Endothelial cell of umbilical vein (primary cell): ENCODE measurements at regions of chr5 and their contacts with region 1.

Region 1: GRCh38 chr5:56123531-56124243 is 109.4 kb downstream of the ANKRD55 start:
- DNase-seq: peak; percentile 99
- H3K4me3 ChIP-seq: peak overlapping the region in 1 of 3 experiments; percentile 33
- H3K27ac ChIP-seq: peak overlapping the region; percentile 83
- H3K4me1 ChIP-seq: peaks cover 40% of the 10 kb centered on the region
- H3K27me3 ChIP-seq: no peaks in the 10 kb centered on the region
- CTCF ChIP-seq: no peak
- POLR2A ChIP-seq: peak; percentile 74

Region 2: DNA sequence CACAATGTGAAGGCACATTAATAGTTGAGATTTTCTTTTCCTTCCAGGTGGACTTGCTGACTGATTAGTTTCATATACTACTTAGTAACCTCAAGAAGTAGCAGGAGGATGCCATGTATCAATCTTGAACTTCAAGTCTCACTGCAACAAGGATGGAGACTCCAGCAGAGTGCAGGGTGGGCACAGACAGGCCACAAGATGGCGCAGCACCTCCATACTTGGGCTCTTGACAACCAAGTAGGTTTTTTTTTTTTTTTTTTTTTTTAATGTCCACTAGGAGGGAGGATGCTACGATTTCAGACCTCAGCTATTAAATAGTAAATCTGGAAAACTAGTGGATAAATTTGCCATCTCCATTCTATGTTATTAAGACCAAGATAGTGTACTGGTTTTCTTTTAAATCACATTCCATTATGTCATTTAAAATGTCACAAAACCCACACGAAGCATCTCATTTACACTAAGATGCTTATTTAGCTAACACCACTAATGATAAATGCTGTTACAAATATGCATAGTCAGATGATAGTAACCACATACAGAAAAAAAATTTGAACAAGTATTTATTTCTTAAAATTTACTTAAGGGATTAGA is 187.5 kb before region 1 on chr5:
- CTCF ChIA-PET with region 1: interaction called, 18 read pairs
- POLR2A ChIA-PET with region 1: interaction called, 3 read pairs
- dilution Hi-C with region 1: no loop called
- intact Hi-C with region 1: no loop called
- DNase-seq: peak; percentile 88
- H3K4me3 ChIP-seq: no peak overlapping the region
- H3K27ac ChIP-seq: no peak overlapping the region
- H3K4me1 ChIP-seq: no peaks in the 10 kb centered on the region
- H3K27me3 ChIP-seq: no peaks in the 10 kb centered on the region
- CTCF ChIP-seq: peak; percentile 82 to 94
- POLR2A ChIP-seq: no peak

Region 3: DNA sequence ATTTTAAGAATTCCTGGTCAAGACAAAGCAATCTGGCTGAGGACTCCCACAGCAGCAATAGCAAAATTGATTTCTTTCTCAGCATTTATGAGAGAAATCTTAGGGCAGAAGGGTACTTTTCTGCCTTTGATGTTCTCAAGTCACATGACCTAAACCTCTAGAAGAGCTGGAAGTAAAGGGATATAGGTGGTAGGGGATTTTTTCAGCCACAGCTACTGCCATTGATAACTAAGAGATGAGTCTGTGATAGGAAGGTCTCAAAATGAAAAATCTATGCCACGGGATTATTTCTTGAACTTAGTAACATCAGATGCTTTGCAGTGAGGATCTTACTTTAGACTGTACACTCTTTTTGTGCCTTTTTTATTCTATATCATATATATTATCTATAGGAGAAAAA is 164.5 kb before region 1 on chr5:
- CTCF ChIA-PET with region 1: no interaction called
- POLR2A ChIA-PET with region 1: no interaction called
- dilution Hi-C with region 1: no loop called
- intact Hi-C with region 1: no loop called
- DNase-seq: no peak
- H3K4me3 ChIP-seq: no peak overlapping the region
- H3K27ac ChIP-seq: no peak overlapping the region
- H3K4me1 ChIP-seq: no peaks in the 10 kb centered on the region
- H3K27me3 ChIP-seq: no peaks in the 10 kb centered on the region
- CTCF ChIP-seq: no peak
- POLR2A ChIP-seq: no peak

Region 4: DNA sequence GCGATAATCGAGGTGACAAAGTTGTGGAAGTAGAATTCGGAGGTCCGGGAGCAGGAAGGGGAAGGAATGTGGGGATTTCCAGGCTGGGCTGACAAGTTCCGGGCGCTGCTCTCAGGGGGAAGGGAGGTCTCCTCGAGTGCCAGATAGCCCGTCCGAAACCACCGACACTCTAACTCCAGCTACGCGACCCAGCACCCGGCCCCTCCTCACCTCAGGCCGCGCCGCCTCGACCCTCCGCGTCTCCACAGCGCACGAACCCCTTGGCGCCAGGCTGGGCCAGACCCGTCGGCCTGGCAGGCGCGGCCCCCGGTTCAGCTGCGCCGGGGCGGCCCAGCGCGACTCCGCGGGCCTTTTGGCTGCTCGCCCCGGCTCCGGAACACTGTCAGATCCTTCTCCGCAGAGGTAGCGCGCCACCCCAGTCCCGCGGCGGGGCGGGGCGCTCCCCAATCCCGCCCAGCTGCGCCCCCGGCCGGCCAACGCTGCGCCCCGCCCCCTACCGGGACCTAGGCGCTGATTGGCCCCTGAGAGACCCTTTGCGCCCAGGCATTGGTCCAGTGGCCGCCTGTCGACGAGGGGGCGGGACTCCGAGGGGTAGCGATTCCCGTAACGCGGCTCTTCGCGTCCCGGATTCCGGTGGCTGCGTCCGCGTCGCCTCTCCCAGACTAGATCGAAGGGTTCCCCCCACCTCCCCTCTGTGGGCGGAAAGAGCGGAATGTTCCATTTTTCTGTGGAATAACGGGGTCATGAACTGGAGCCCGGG is 128.9 kb before region 1 on chr5 and contains the start of gene IL6ST:
- CTCF ChIA-PET with region 1: interaction called, 5 read pairs
- POLR2A ChIA-PET with region 1: no interaction called
- dilution Hi-C with region 1: no loop called
- intact Hi-C with region 1: loop called (anchors 1 kb)
- DNase-seq: peak; percentile 99
- H3K4me3 ChIP-seq: peak within 1 kb of the TSS; percentile 70 to 100 (median 99)
- H3K27ac ChIP-seq: peak within 1 kb of the TSS; percentile 99
- H3K4me1 ChIP-seq: peaks cover 30% of the 10 kb centered on the region
- H3K27me3 ChIP-seq: no peaks in the 10 kb centered on the region
- CTCF ChIP-seq: no peak
- POLR2A ChIP-seq: peak; percentile 95
- total RNA-seq, gene IL6ST: 345 and 361 TPM in 2 replicates

Region 5: GRCh38 chr5:56039985-56040384 is 83.7 kb before region 1 on chr5:
- CTCF ChIA-PET with region 1: no interaction called
- POLR2A ChIA-PET with region 1: no interaction called
- dilution Hi-C with region 1: no loop called
- intact Hi-C with region 1: loop called (anchors 5 kb)
- DNase-seq: peak; percentile 72
- H3K4me3 ChIP-seq: no peak overlapping the region
- H3K27ac ChIP-seq: peak overlapping the region; percentile 83
- H3K4me1 ChIP-seq: peaks cover 23% of the 10 kb centered on the region
- H3K27me3 ChIP-seq: no peaks in the 10 kb centered on the region
- CTCF ChIP-seq: no peak
- POLR2A ChIP-seq: no peak

Region 6: GRCh38 chr5:56099346-56099745 is 24.3 kb before region 1 on chr5:
- CTCF ChIA-PET with region 1: no interaction called
- POLR2A ChIA-PET with region 1: no interaction called
- dilution Hi-C with region 1: no loop called
- intact Hi-C with region 1: loop called (anchors 2 kb)
- DNase-seq: peak; percentile 96
- H3K4me3 ChIP-seq: no peak overlapping the region
- H3K27ac ChIP-seq: no peak overlapping the region
- H3K4me1 ChIP-seq: peaks cover 26% of the 10 kb centered on the region
- H3K27me3 ChIP-seq: no peaks in the 10 kb centered on the region
- CTCF ChIP-seq: no peak
- POLR2A ChIP-seq: no peak

Region 7: GRCh38 chr5:56169281-56169680 is 45.6 kb after region 1 on chr5:
- CTCF ChIA-PET with region 1: interaction called, 5 read pairs
- POLR2A ChIA-PET with region 1: no interaction called
- dilution Hi-C with region 1: no loop called
- intact Hi-C with region 1: loop called (anchors 1 kb)
- DNase-seq: peak; percentile 95
- H3K4me3 ChIP-seq: no peak overlapping the region
- H3K27ac ChIP-seq: peak overlapping the region; percentile 96
- H3K4me1 ChIP-seq: peaks cover 48% of the 10 kb centered on the region
- H3K27me3 ChIP-seq: no peaks in the 10 kb centered on the region
- CTCF ChIP-seq: no peak
- POLR2A ChIP-seq: no peak

Region 8: DNA sequence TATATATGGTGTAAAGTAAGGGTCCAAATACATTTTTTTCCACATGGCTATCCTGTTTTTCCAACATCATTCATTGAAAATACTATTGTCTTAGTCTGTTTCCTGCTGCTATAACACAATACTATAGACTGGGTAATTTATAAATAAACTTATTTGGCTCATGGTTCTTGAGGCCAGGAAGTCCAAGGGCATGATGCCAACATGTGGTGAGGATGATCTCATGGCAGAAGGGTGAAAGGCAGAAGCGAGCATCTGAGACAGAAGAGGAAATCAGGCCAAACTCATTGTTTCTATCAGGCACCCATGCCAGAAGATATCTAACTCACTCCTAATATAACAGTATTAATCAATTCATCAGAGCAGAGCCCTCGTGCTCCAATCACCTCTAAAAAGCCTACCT is 66.8 kb after region 1 on chr5:
- CTCF ChIA-PET with region 1: interaction called, 3 read pairs
- POLR2A ChIA-PET with region 1: no interaction called
- dilution Hi-C with region 1: loop called (anchors 10 kb)
- intact Hi-C with region 1: loop called (anchors 1 kb)
- DNase-seq: peak; percentile 96
- H3K4me3 ChIP-seq: no peak overlapping the region
- H3K27ac ChIP-seq: peak overlapping the region; percentile 77
- H3K4me1 ChIP-seq: peaks cover 33% of the 10 kb centered on the region
- H3K27me3 ChIP-seq: no peaks in the 10 kb centered on the region
- CTCF ChIP-seq: no peak
- POLR2A ChIP-seq: no peak